Mucosa of descending colon (tissue), 3 donors: ENCODE measurements at regions of chr10 and their contacts with region 1.

Region 1: GRCh38 chr10:51422311-51423120 is 276.9 kb downstream of the CSTF2T start:
- DNase-seq: peak in 2 of 3 donors; percentile 45 to 87
- ATAC-seq: peak; percentile 87
- H3K4me3 ChIP-seq: no peak overlapping the region
- H3K4me1 ChIP-seq: peaks cover 6% of the 10 kb centered on the region
- CTCF ChIP-seq: peak; percentile 51

Region 2: GRCh38 chr10:51074238-51075028 is 348.1 kb before region 1 on chr10 and contains the start of gene PRKG1:
- intact Hi-C with region 1: loop called in 1 of 2 experiments (anchors 10 kb)
- DNase-seq: peak; percentile 70 to 79 (median 74)
- ATAC-seq: peak; percentile 91
- H3K4me3 ChIP-seq: peak within 1 kb of the TSS; percentile 13
- H3K4me1 ChIP-seq: no peaks in the 10 kb centered on the region
- CTCF ChIP-seq: no peak
- total RNA-seq, gene PRKG1: 17.1 to 55.6 (median 21.1) TPM